Activated CD8-positive, alpha-beta T cell treated with anti-CD3 and anti-CD28 coated beads, Interleukin-2, amount 10 ng/mL, durations not matched to agents 7 days and 5 days (primary cell): ENCODE measurements at regions of chr10 and their contacts with region 1.

Region 1: GRCh38 chr10:100481462-100482081 is 18.8 kb downstream of the WNT8B start:
- DNase-seq: peak; percentile 93
- ATAC-seq: peak; percentile 94
- H3K4me3 Mint-ChIP-seq: peak overlapping the region; percentile 79
- H3K27ac Mint-ChIP-seq: peak overlapping the region; percentile 74
- H3K4me1 Mint-ChIP-seq: peaks cover 38% of the 10 kb centered on the region
- H3K27me3 Mint-ChIP-seq: peaks cover 13% of the 10 kb centered on the region

Region 2: GRCh38 chr10:100346765-100347567 is 134.6 kb before region 1 on chr10 and contains the start of gene SCD:
- CTCF ChIA-PET with region 1: interaction called, 14 read pairs
- POLR2A ChIA-PET with region 1: no interaction called
- DNase-seq: peak; percentile 95
- ATAC-seq: peak; percentile 94
- H3K4me3 Mint-ChIP-seq: peak within 1 kb of the TSS; percentile 96
- H3K27ac Mint-ChIP-seq: peak within 1 kb of the TSS; percentile 90
- H3K4me1 Mint-ChIP-seq: peaks cover 67% of the 10 kb centered on the region
- H3K27me3 Mint-ChIP-seq: no peaks in the 10 kb centered on the region
- total RNA-seq, gene SCD: 239 to 240 TPM

Region 3: DNA sequence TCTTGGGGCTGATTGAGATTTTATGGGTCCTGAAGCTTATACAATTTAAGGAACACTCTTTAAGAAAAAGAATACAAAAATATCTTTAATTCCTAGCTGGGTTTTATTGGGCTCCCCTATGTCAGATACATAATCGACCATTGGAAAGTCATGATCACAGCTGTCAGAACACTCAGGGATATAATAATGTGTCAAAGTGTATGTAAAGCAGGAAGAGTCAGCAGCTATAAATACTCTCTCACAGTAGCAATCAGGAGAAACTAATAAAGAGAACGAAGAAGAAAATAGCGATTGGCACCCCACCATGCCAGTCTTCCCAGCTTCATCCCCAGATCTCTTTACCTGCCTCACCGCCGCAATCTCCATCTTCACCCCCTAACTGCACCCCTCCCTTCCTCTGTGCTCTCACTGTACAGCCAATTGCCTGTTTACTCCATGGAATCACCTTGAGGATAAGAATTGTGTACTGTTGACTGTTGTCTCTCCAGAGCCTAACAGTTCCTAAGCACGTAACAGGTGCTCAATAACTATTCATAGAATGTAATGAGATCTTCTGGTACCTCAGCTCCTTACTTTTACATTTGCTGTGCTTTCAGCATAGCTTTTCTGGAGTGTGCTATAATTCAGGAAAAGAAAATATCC is 42.8 kb before region 1 on chr10:
- CTCF ChIA-PET with region 1: interaction called, 37 read pairs
- POLR2A ChIA-PET with region 1: no interaction called
- DNase-seq: no peak
- ATAC-seq: no peak
- H3K4me3 Mint-ChIP-seq: no peak overlapping the region
- H3K27ac Mint-ChIP-seq: no peak overlapping the region
- H3K4me1 Mint-ChIP-seq: peaks cover 4% of the 10 kb centered on the region
- H3K27me3 Mint-ChIP-seq: no peaks in the 10 kb centered on the region

Region 4: DNA sequence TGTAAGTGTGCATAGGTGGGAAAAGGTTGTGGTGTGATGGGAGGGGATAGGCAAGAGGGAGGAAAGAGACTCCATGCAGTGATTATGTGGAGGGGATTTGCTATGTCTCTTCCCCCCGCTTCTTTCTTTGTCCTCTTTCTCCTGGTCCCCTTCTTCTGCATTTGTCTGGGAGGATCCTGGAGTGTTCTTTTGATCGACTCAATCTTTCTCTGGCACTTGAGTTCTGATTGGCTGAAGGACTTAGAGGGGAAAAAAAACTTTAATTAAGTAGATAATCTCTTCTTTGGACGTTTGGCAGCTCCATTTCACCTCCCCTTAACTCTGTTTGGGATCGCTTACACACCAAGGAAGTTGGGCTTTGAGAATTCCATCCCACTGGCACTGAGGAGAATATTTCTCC is 18.9 kb before region 1 on chr10 and contains the start of gene WNT8B:
- CTCF ChIA-PET with region 1: interaction called, 18 read pairs
- POLR2A ChIA-PET with region 1: no interaction called
- DNase-seq: no peak
- ATAC-seq: no peak
- H3K4me3 Mint-ChIP-seq: no peak within 1 kb of the TSS
- H3K27ac Mint-ChIP-seq: no peak within 1 kb of the TSS
- H3K4me1 Mint-ChIP-seq: no peaks in the 10 kb centered on the region
- H3K27me3 Mint-ChIP-seq: peaks cover 10% of the 10 kb centered on the region
- total RNA-seq, gene WNT8B: 0.18 to 0.37 TPM

Region 5: DNA sequence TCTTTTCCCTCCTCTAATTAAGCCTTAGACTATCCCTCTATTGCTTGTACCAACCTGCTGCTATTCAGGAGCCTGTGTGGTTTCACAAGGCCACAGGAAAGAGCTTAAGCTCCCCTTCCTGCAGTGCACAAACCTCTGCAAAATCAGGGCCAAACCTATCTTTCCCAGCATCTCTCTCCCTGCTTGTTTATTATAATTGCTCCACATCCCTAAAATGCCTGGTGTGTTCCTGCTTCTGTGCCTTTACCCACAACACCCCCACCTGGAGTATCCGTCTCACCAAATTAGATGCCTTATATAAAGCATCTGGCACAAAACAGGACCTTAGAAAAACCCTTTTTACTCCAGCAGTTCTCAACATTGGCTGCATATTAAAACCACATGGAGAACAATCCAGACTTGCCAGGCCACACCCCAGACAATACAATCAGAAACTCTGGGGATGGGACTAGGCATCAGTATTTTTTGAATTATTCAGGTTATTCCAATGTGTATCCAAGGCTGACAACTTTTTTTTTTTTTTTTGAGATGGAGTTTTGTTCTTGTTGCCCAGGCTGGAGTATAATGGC is 21.4 kb after region 1 on chr10:
- CTCF ChIA-PET with region 1: interaction called, 253 read pairs
- POLR2A ChIA-PET with region 1: interaction called, 102 read pairs
- DNase-seq: no peak
- ATAC-seq: no peak
- H3K4me3 Mint-ChIP-seq: no peak overlapping the region
- H3K27ac Mint-ChIP-seq: peak overlapping the region; percentile 77
- H3K4me1 Mint-ChIP-seq: peaks cover 89% of the 10 kb centered on the region
- H3K27me3 Mint-ChIP-seq: no peaks in the 10 kb centered on the region

Region 6: GRCh38 chr10:100518761-100519241 is 37.2 kb after region 1 on chr10:
- CTCF ChIA-PET with region 1: interaction called, 156 read pairs
- POLR2A ChIA-PET with region 1: interaction called, 12 read pairs
- DNase-seq: peak; percentile 77
- ATAC-seq: peak; percentile 79
- H3K4me3 Mint-ChIP-seq: no peak overlapping the region
- H3K27ac Mint-ChIP-seq: peak overlapping the region; percentile 35
- H3K4me1 Mint-ChIP-seq: peaks cover 41% of the 10 kb centered on the region
- H3K27me3 Mint-ChIP-seq: no peaks in the 10 kb centered on the region

Region 7: GRCh38 chr10:100535715-100536353 is 54.3 kb after region 1 on chr10 and contains the start of gene HIF1AN:
- CTCF ChIA-PET with region 1: interaction called, 19 read pairs
- POLR2A ChIA-PET with region 1: interaction called, 3 read pairs
- DNase-seq: peak; percentile 94
- ATAC-seq: peak; percentile 98
- H3K4me3 Mint-ChIP-seq: no peak within 1 kb of the TSS
- H3K27ac Mint-ChIP-seq: peak within 1 kb of the TSS; percentile 21
- H3K4me1 Mint-ChIP-seq: peaks cover 14% of the 10 kb centered on the region
- H3K27me3 Mint-ChIP-seq: no peaks in the 10 kb centered on the region
- total RNA-seq, gene HIF1AN: 46.5 to 48.1 TPM